ENCODE measurements at regions of chr2 and their contacts with region 1.

Region 1: DNA sequence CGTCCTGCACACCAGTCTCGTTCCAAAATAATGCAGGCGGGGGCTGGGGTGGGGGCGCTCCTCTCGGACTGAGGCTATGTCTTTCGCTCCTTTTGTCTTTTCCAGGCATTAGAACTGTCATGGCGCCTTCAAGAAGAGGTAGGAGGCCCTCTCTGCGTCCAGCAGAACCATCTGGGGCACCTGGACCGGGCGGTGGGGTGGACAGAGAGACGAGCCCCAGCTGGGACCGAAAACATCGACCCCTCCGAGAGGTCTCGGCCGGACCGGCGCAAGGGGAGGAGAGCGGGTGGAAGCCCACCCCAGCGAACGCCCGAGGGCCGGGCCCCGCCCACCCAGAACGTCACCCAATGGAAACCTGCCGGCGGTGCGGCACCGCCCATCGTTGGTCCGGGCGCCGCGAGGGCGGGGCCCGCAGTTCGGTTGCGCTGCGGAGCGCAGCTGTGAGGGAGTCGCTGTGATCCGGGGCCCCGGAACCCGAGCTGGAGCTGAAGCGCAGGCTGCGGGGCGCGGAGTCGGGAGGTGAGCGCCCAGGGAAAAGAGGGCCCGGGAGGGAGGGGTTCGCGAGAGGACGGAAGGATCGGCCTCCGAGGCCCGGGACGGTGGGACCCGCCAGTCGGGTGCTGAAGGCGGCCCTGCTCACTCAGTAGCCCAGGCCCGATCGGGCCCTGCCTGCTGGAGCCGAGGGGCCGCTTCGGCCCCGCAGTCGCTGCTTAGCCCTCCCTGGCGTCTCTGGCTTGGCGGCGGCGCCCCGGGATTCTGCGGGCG is at the start of gene NRBP1:
- DNase-seq: peak; percentile 95
- ATAC-seq: peak; percentile 92
- H3K4me3 ChIP-seq: peak within 1 kb of the TSS; percentile 68 to 98 (median 88)
- H3K4me3 Mint-ChIP-seq: peak within 1 kb of the TSS; percentile 97
- H3K27ac ChIP-seq: peak within 1 kb of the TSS; percentile 82 to 86
- H3K27ac Mint-ChIP-seq: peak within 1 kb of the TSS; percentile 97
- H3K4me1 ChIP-seq: peaks cover 15 to 21% of the 10 kb centered on the region in 2 donors
- H3K4me1 Mint-ChIP-seq: peaks cover 29% of the 10 kb centered on the region
- H3K27me3 ChIP-seq: no peaks in the 10 kb centered on the region
- H3K27me3 Mint-ChIP-seq: no peaks in the 10 kb centered on the region
- CTCF ChIP-seq: no peak
- total RNA-seq, gene NRBP1: 109 and 115 TPM in 2 replicates

Region 2: GRCh38 chr2:27356382-27357181 is 71.8 kb before region 1 on chr2 and contains the start of gene GTF3C2:
- CTCF ChIA-PET with region 1: interaction called, 3 read pairs
- POLR2A ChIA-PET with region 1: no interaction called
- intact Hi-C with region 1: loop called (anchors 1 kb)
- DNase-seq: peak; percentile 98
- ATAC-seq: peak; percentile 82
- H3K4me3 ChIP-seq: peak within 1 kb of the TSS; percentile 64 to 90 (median 82)
- H3K4me3 Mint-ChIP-seq: peak within 1 kb of the TSS; percentile 97
- H3K27ac ChIP-seq: peak within 1 kb of the TSS; percentile 86 to 88
- H3K27ac Mint-ChIP-seq: peak within 1 kb of the TSS; percentile 99
- H3K4me1 ChIP-seq: peaks cover 18 to 25% of the 10 kb centered on the region in 2 donors
- H3K4me1 Mint-ChIP-seq: peaks cover 48% of the 10 kb centered on the region
- H3K27me3 ChIP-seq: no peaks in the 10 kb centered on the region
- H3K27me3 Mint-ChIP-seq: no peaks in the 10 kb centered on the region
- CTCF ChIP-seq: no peak
- total RNA-seq, gene GTF3C2: 114 and 121 TPM in 2 replicates

Region 3: DNA sequence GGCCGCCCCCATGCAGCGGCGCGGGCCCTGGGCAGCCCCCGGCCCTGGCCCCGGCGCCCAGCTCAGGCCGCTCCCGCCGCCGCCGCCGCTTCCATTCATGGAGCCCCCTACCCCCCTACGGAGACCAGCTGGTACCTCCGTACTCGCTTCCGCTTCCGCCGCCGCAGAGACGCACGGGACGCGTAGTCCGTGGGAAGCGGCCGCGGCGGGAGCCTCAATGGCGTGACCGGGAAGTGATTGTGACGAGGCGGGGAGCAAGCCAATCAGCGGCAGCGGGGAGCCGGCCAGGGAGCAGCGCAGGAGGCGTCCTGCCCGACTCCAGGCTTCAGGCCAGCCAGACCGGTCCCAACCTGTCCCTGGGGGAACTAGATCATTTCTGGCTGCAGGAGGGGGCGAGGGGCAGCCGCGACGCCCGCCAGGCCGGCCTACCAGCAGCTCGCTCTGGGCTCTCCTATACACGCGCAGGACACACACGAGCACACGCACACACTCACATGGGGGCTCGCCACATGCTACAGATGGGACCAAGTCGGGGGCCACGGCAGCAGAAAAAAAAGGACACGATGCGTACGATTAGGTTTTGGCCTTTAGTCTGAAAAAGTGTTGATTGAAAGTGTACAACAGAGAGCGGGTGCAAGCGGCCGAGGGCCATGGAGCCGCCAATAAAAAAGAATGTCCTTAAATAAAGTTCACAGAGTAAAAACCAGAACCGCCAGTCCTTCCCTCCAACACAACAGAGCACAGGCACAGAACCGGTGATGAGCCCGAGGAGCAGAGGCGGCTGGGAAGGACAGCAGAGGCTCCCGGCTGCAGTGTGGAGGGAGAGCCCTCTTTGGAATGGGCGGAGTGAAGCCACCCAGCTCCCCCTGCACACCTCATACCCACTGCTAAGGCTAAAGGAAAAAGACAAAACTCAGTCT is 47.5 kb before region 1 on chr2 and contains the start of gene ZNF513:
- CTCF ChIA-PET with region 1: interaction called, 7 read pairs
- POLR2A ChIA-PET with region 1: interaction called, 3 read pairs
- intact Hi-C with region 1: loop called (anchors 2 kb)
- DNase-seq: peak; percentile 92
- ATAC-seq: peak; percentile 94
- H3K4me3 ChIP-seq: peak within 1 kb of the TSS; percentile 40 to 66 (median 63)
- H3K4me3 Mint-ChIP-seq: peak within 1 kb of the TSS; percentile 94
- H3K27ac ChIP-seq: peak within 1 kb of the TSS; percentile 56 to 94
- H3K27ac Mint-ChIP-seq: peak within 1 kb of the TSS; percentile 96
- H3K4me1 ChIP-seq: peaks cover 16 to 20% of the 10 kb centered on the region in 2 donors
- H3K4me1 Mint-ChIP-seq: peaks cover 30% of the 10 kb centered on the region
- H3K27me3 ChIP-seq: no peaks in the 10 kb centered on the region
- H3K27me3 Mint-ChIP-seq: no peaks in the 10 kb centered on the region
- CTCF ChIP-seq: no peak
- total RNA-seq, gene ZNF513: 29.0 and 31.7 TPM in 2 replicates

Region 4: GRCh38 chr2:27441958-27442919 is 13.8 kb after region 1 on chr2 and contains the start of gene KRTCAP3:
- CTCF ChIA-PET with region 1: interaction called, 4 read pairs
- POLR2A ChIA-PET with region 1: interaction called, 3 read pairs
- intact Hi-C with region 1: loop called (anchors 1 kb)
- DNase-seq: peak; percentile 70
- ATAC-seq: peak; percentile 98
- H3K4me3 ChIP-seq: peak within 1 kb of the TSS in 3 of 5 experiments; percentile 19 to 37 (median 27)
- H3K4me3 Mint-ChIP-seq: peak within 1 kb of the TSS; percentile 72
- H3K27ac ChIP-seq: no peak within 1 kb of the TSS
- H3K27ac Mint-ChIP-seq: peak within 1 kb of the TSS; percentile 72
- H3K4me1 ChIP-seq: peaks cover 3 to 6% of the 10 kb centered on the region in 2 donors
- H3K4me1 Mint-ChIP-seq: peaks cover 12% of the 10 kb centered on the region
- H3K27me3 ChIP-seq: no peaks in the 10 kb centered on the region
- H3K27me3 Mint-ChIP-seq: no peaks in the 10 kb centered on the region
- CTCF ChIP-seq: peak; percentile 58
- total RNA-seq, gene KRTCAP3: 15.0 and 16.5 TPM in 2 replicates

Region 5: DNA sequence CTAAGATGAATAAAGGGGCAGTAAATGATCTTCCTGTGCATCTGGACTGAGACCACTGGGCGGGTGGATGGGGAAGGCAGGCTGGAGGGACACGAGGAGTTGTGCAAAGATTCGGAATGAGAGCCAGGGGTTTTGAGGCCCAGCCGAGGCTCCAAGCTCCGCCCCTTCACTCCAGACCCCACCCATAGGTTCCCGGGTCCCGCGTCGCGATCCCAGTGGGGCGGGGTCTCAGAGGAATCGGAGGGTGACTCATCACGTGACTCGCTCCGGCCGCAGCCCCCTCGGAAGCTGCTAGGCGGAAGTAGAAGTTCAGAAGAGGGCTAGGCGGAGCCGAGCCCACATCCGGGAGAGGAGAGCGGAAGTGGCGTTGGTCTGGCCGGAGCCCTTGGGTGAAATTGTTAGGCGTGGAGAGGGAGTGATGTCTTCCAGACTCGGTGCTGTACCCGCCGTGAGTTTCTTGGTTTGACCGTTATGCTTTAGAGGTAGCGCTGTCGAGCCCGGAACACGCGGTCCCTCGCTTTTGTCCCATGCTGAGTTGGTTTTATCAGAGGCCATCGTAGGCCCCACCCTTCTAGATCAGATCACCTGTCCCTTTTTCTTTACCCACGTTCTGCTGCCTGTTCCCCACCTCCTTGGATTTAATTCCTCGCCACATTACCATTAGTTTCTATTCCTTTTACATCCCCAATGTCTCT is 154.4 kb after region 1 on chr2 and contains the start of gene ZNF512:
- CTCF ChIA-PET with region 1: no interaction called
- POLR2A ChIA-PET with region 1: no interaction called
- intact Hi-C with region 1: loop called (anchors 2 kb)
- DNase-seq: peak; percentile 93
- ATAC-seq: peak; percentile 94
- H3K4me3 ChIP-seq: peak within 1 kb of the TSS; percentile 66 to 98 (median 80)
- H3K4me3 Mint-ChIP-seq: peak within 1 kb of the TSS; percentile 96
- H3K27ac ChIP-seq: peak within 1 kb of the TSS; percentile 70 to 72
- H3K27ac Mint-ChIP-seq: peak within 1 kb of the TSS; percentile 96
- H3K4me1 ChIP-seq: peaks cover 17 to 29% of the 10 kb centered on the region in 2 donors
- H3K4me1 Mint-ChIP-seq: peaks cover 40% of the 10 kb centered on the region
- H3K27me3 ChIP-seq: no peaks in the 10 kb centered on the region
- H3K27me3 Mint-ChIP-seq: peaks cover 1% of the 10 kb centered on the region
- CTCF ChIP-seq: no peak
- total RNA-seq, gene ZNF512: 65.2 and 72.3 TPM in 2 replicates

Region 6: GRCh38 chr2:27628767-27629709 is 200.6 kb after region 1 on chr2 and contains the starts of genes CCDC121 and GPN1:
- CTCF ChIA-PET with region 1: no interaction called
- POLR2A ChIA-PET with region 1: no interaction called
- intact Hi-C with region 1: loop called (anchors 5 kb)
- DNase-seq: peak; percentile 94
- ATAC-seq: peak; percentile 100
- H3K4me3 ChIP-seq: peak within 1 kb of the TSS; percentile 83 to 98 (median 91)
- H3K4me3 Mint-ChIP-seq: no peak within 1 kb of the TSS
- H3K27ac ChIP-seq: peak within 1 kb of the TSS; percentile 70 to 83
- H3K27ac Mint-ChIP-seq: peak within 1 kb of the TSS; percentile 51
- H3K4me1 ChIP-seq: peaks cover 10 to 17% of the 10 kb centered on the region in 2 donors
- H3K4me1 Mint-ChIP-seq: peaks cover 24% of the 10 kb centered on the region
- H3K27me3 ChIP-seq: no peaks in the 10 kb centered on the region
- H3K27me3 Mint-ChIP-seq: no peaks in the 10 kb centered on the region
- CTCF ChIP-seq: no peak
- total RNA-seq, gene CCDC121: 1.3 and 2.2 TPM in 2 replicates
- total RNA-seq, gene GPN1: 26.0 and 27.8 TPM in 2 replicates

Region 7: DNA sequence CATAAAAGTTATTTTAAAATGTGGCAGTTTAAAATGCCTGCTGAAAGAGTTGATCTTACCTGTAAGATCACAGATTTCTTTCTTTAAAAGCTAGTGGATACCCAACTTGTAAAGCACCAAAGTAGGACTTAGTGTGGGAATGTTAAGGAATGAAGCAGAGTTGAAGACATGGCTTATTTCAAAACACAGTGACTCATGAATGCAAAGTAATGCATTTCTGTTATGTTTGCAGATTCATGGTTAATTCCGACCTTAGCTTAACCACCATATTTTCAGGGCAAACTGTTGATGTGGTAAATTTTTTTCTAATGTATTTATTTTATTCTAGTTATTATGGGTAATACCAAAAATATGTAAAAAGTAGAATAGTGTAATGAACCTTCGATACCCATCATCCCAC is 757.5 kb after region 1 on chr2:
- CTCF ChIA-PET with region 1: no interaction called
- POLR2A ChIA-PET with region 1: no interaction called
- intact Hi-C with region 1: no loop called
- DNase-seq: no peak
- ATAC-seq: no peak
- H3K4me3 ChIP-seq: no peak overlapping the region
- H3K4me3 Mint-ChIP-seq: no peak overlapping the region
- H3K27ac ChIP-seq: no peak overlapping the region
- H3K27ac Mint-ChIP-seq: no peak overlapping the region
- H3K4me1 ChIP-seq: no peaks in the 10 kb centered on the region
- H3K4me1 Mint-ChIP-seq: no peaks in the 10 kb centered on the region
- H3K27me3 ChIP-seq: no peaks in the 10 kb centered on the region
- H3K27me3 Mint-ChIP-seq: no peaks in the 10 kb centered on the region
- CTCF ChIP-seq: no peak

Measured in B cell (primary cell).